Thyroid gland (tissue), 4 donors: ENCODE measurements at regions of chr16 and their contacts with region 1.

Region 1: GRCh38 chr16:19717771-19718602 is at the starts of genes IQCK and KNOP1:
- DNase-seq: peak; percentile 88 to 90
- H3K4me3 ChIP-seq: peak within 1 kb of the TSS; percentile 43 to 98 (median 92)
- H3K27ac ChIP-seq: peak within 1 kb of the TSS; percentile 36 to 63 (median 60)
- H3K4me1 ChIP-seq: peaks cover 23 to 26% of the 10 kb centered on the region in 2 donors
- H3K27me3 ChIP-seq: no peaks in the 10 kb centered on the region
- CTCF ChIP-seq: peak in 1 of 6 experiments; percentile 12
- POLR2A ChIP-seq: peak in 1 of 2 donors; percentile 69
- total RNA-seq, gene IQCK: 49.7 to 103 (median 94.2) TPM
- total RNA-seq, gene KNOP1: 8.9 to 11.5 (median 10.5) TPM

Region 2: DNA sequence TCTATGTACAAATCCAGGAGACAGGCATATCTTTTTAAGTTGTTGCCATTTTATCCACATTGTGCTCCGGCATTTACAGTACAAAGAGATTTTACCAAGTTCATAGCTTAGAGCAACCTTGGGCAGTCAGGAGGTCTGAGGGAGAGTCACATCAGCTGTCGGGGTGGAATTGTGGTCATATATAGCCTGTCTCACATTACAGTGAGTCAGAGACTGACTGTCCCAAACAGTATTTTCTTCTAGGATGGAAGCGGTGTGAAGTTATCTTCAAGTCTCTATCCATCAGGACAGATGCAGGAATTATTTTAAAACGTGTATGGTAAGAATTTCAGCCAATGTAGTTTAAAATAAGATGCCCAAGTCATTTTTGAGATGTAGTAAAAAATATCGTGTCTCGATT is 113.7 kb after region 1 on chr16:
- intact Hi-C with region 1: no loop called
- DNase-seq: no peak
- H3K4me3 ChIP-seq: no peak overlapping the region
- H3K27ac ChIP-seq: no peak overlapping the region
- H3K4me1 ChIP-seq: no peaks in the 10 kb centered on the region
- H3K27me3 ChIP-seq: no peaks in the 10 kb centered on the region
- CTCF ChIP-seq: no peak
- POLR2A ChIP-seq: no peak

Region 3: GRCh38 chr16:19886073-19886941 is 168.3 kb after region 1 on chr16:
- intact Hi-C with region 1: loop called (anchors 5 kb)
- DNase-seq: peak; percentile 72 to 76
- H3K4me3 ChIP-seq: no peak overlapping the region
- H3K27ac ChIP-seq: no peak overlapping the region
- H3K4me1 ChIP-seq: peaks cover 12 to 15% of the 10 kb centered on the region in 2 donors
- H3K27me3 ChIP-seq: no peaks in the 10 kb centered on the region
- CTCF ChIP-seq: peak in 5 of 6 experiments; percentile 98 to 100 (median 99)
- POLR2A ChIP-seq: no peak